BJ (cell line): ENCODE measurements at regions of chr15 and their contacts with region 1.

Region 1: DNA sequence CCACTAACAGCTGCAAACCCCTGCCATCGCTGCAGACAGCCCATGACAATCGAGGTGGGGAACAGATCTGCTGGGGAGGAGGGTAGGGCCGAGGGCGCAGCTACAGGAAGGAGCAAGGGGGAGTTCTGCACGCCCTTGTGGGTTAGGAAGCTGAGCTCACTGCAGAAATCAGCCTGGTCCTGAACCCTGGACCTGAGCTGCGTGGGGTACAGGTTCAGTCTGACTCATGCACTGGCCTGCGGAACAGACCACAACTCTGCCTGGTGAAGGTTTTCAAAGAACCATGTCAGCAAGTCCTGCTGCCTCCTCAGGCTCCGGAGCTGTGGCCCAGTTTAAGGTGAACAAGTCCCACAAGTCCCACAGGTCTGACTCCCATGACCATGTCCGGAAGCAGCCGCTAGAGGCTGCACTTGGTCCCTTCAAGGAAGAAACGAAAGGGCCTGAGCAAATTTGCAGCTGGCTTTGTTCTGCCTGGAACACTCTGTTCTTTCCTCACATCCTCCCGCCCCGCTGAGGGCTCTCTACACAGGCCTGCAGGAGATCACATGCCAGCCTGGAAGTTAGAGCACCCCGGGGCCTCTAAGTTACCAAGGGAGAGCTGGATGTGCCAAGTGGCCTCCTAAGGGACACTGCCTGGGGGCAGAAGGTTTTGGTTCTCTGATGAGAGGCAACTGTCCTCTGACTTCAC is 49.4 kb upstream of the AKAP13 start:
- DNase-seq: no peak
- H3K4me3 ChIP-seq: no peak overlapping the region
- H3K27me3 ChIP-seq: no peaks in the 10 kb centered on the region
- CTCF ChIP-seq: peak; percentile 99

Region 2: GRCh38 chr15:85296615-85297402 is 34.2 kb before region 1 on chr15:
- CTCF ChIA-PET with region 1: interaction called, 36 read pairs
- POLR2A ChIA-PET with region 1: no interaction called
- DNase-seq: no peak
- H3K4me3 ChIP-seq: peak overlapping the region; percentile 17; the same call in 1 of the 2 replicates
- H3K27me3 ChIP-seq: peaks cover under 1% of the 10 kb centered on the region
- CTCF ChIP-seq: peak; percentile 77

Region 3: GRCh38 chr15:85318048-85318731 is 12.9 kb before region 1 on chr15:
- CTCF ChIA-PET with region 1: interaction called, 38 read pairs
- POLR2A ChIA-PET with region 1: no interaction called
- DNase-seq: peak; percentile 89
- H3K4me3 ChIP-seq: no peak overlapping the region
- H3K27me3 ChIP-seq: no peaks in the 10 kb centered on the region
- CTCF ChIP-seq: peak; percentile 26; the same call in 1 of the 2 replicates

Region 4: GRCh38 chr15:85412956-85413854 is 82.2 kb after region 1 on chr15:
- CTCF ChIA-PET with region 1: interaction called, 33 read pairs
- POLR2A ChIA-PET with region 1: no interaction called
- DNase-seq: no peak
- H3K4me3 ChIP-seq: no peak overlapping the region
- H3K27me3 ChIP-seq: no peaks in the 10 kb centered on the region
- CTCF ChIP-seq: no peak

Region 5: GRCh38 chr15:85485956-85486567 is 155.0 kb after region 1 on chr15:
- CTCF ChIA-PET with region 1: interaction called, 16 read pairs
- POLR2A ChIA-PET with region 1: no interaction called
- DNase-seq: no peak
- H3K4me3 ChIP-seq: no peak overlapping the region
- H3K27me3 ChIP-seq: no peaks in the 10 kb centered on the region
- CTCF ChIP-seq: peak; percentile 75